Prostate gland (tissue), 2 donors: ENCODE measurements at regions of chr11 and their contacts with region 1.

Region 1: GRCh38 chr11:11022125-11022730 is 164.4 kb upstream of the ZBED5 start:
- DNase-seq: no peak
- H3K4me3 ChIP-seq: no peak overlapping the region
- H3K27ac ChIP-seq: no peak overlapping the region
- H3K4me1 ChIP-seq: no peaks in the 10 kb centered on the region
- H3K27me3 ChIP-seq: no peaks in the 10 kb centered on the region
- CTCF ChIP-seq: peak in 3 of 4 experiments; percentile 55 to 71 (median 66)
- POLR2A ChIP-seq: no peak

Region 2: DNA sequence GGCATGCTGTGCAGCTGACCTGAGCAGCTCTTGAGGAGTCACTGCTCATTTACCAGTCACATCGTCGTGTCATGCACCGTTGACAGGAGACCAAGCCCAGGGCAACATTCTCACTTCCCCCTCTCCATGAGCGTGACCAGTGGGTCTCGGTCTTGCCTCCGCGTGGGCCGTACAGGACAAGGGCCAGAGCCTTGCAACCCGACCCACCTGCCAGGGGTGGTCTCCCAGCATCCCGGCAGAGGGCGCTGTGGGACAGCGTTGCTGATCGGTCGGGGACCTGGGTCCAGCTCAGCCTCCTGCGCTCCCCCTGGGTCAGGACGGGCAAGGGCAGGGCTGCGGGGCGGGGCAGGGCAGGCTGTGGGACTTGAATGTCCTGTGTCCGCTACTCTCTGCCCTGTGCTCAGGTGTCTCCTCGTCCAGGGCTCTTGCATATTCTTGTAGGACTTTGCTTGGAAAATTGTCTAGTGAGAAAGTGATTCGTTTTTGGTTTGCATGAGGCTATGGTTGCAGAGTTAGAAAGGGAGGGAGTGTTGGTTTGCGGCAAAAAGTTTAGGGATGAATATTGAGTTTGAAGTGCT is 229.7 kb before region 1 on chr11:
- intact Hi-C with region 1: loop called (anchors 5 kb)
- DNase-seq: peak; percentile 77
- H3K4me3 ChIP-seq: no peak overlapping the region
- H3K27ac ChIP-seq: no peak overlapping the region
- H3K4me1 ChIP-seq: no peaks in the 10 kb centered on the region
- H3K27me3 ChIP-seq: no peaks in the 10 kb centered on the region
- CTCF ChIP-seq: peak; percentile 69 to 95 (median 86)
- POLR2A ChIP-seq: no peak

Region 3: GRCh38 chr11:10933455-10934292 is 88.6 kb before region 1 on chr11:
- intact Hi-C with region 1: loop called (anchors 2 kb)
- DNase-seq: peak; percentile 91
- H3K4me3 ChIP-seq: peak overlapping the region; percentile 19 to 34
- H3K27ac ChIP-seq: peak overlapping the region; percentile 81 to 84
- H3K4me1 ChIP-seq: no peaks in the 10 kb centered on the region
- H3K27me3 ChIP-seq: no peaks in the 10 kb centered on the region
- CTCF ChIP-seq: peak; percentile 88 to 98 (median 96)
- POLR2A ChIP-seq: peak; percentile 32

Region 4: GRCh38 chr11:11117730-11118129 is 95.5 kb after region 1 on chr11:
- intact Hi-C with region 1: no loop called
- DNase-seq: no peak
- H3K4me3 ChIP-seq: no peak overlapping the region
- H3K27ac ChIP-seq: no peak overlapping the region
- H3K4me1 ChIP-seq: no peaks in the 10 kb centered on the region
- H3K27me3 ChIP-seq: no peaks in the 10 kb centered on the region
- CTCF ChIP-seq: no peak
- POLR2A ChIP-seq: no peak